PC-9 (cell line): ENCODE measurements at regions of chr11 and their contacts with region 1.

Region 1: GRCh38 chr11:101498891-101499290 is 84.9 kb downstream of the TRPC6 start:
- DNase-seq: no peak
- H3K4me3 ChIP-seq: no peak overlapping the region
- H3K27ac ChIP-seq: no peak overlapping the region
- H3K4me1 ChIP-seq: no peaks in the 10 kb centered on the region
- H3K27me3 ChIP-seq: no peaks in the 10 kb centered on the region
- CTCF ChIP-seq: no peak

Region 2: DNA sequence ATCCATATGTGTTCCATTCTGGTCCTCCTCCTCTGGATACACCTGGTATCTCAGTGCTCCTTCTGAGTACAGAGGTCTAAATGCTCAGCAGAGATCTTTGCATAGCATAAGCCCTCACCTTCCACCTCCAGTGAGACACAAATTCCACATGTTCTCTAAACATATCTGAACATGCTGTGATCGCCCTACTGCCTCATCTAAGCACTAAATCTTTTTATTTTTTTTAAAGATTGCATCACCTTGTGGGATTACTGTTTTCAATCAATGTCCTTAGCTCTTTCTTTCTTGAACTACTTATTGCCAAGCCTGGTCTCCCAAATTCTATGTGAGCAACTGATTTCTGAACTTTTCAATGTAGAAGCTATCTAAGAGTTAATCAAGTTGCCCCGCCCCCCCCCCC is 28.5 kb before region 1 on chr11:
- CTCF ChIA-PET with region 1: no interaction called
- POLR2A ChIA-PET with region 1: interaction called, 14 read pairs
- intact Hi-C with region 1: no loop called
- DNase-seq: no peak
- H3K4me3 ChIP-seq: no peak overlapping the region
- H3K27ac ChIP-seq: no peak overlapping the region
- H3K4me1 ChIP-seq: no peaks in the 10 kb centered on the region; the same call in 1 of the 2 replicates
- H3K27me3 ChIP-seq: no peaks in the 10 kb centered on the region
- CTCF ChIP-seq: no peak